ENCODE measurements at regions of chr13 and their contacts with region 1.

Region 1: DNA sequence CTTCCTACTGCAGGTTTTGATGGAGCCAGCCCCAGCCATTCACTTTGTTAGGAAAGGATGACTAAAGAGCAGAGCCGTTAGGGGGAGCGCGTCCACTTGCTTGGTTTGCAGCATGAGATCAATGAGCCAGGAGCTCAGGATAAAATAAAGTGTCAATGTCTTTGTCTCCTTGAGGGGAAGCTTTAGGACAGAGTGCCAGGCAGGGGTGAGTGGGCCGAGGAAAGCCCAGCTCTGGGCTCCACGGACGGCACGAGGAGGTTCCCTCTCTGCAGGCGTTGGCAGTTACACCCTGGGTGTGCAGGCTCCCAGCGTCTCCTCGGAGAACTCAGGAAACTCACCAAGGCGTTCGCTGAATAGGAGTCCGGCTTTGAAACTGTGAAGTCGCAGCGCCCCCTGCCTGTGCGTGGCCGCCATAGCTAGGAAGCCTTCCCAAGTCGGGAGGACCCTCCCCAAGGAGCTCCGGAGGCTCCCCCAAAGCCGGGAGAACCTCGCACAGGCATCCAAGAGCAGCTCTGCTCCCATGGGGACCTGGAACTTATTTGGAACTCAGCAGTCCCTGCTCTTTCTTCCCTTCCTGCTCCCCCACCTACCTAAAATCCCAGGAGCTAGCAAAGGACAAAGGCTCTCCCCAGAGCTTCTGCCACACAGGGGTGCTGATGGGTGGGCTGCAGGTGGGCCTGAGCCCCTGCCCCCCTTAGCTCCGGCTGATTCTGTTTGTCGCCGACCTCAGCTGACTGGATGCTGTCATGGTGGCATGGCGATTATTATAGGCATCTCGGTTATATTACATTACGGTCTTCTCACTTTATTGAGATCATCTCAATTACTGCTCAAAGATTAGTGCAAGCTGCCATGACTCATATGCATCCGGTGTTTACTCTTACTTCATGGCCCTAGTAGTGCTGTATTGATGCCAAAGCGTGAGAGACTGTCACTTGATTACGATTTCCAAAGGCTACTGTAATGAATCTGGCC is 34.4 kb downstream of the GSX1 start:
- DNase-seq: peak; percentile 77 to 91 (median 82)
- ATAC-seq: peak; percentile 98
- H3K4me3 ChIP-seq: no peak overlapping the region
- H3K27ac ChIP-seq: no peak overlapping the region
- H3K4me1 ChIP-seq: peaks cover 0 to 12% of the 10 kb centered on the region in 2 donors
- H3K27me3 ChIP-seq: peaks cover 48 to 100% of the 10 kb centered on the region in 2 donors
- CTCF ChIP-seq: peak; percentile 86 to 95

Region 2: DNA sequence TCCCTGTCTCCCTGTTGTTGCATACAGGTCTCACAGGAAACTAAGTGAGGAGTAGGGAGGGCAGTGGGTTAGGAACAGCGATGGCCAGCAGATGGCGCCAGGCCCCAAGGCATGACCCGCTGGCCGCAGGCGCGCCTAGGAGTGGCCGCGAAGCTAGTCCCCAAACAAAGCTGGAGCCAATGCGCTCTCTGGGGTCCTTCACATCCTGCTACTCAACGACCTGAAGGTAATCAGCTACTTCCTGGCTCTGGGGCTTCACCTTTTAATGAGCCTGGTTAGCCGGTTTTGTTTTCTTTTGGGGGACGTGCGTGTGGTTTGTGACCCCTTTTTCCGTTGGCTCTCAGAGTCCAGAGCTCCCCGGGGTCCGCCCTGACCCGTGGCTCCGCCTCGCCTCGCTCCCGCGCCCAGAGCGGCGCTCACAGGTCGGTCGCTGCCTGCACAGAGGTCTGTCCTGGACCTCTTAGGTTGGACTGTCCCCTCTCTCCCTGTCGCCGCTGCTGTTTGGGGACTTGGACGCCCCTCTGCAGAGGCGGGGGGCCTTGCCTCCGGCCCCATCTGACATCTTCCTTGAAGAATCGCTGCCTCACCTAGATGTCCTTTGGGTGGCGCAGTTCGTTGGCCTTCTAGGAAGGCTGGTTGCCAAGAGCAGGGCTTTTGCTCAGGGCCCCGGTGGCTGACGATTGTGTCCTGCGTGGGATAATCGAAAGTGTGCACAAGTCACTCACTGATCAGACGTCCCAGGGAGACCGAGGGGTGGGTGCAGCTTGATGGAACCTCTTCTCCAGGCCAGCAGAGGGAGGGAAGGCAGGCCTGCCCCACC is 464.4 kb before region 1 on chr13:
- intact Hi-C with region 1: loop called in 1 of 2 experiments (anchors 5 kb)
- DNase-seq: peak; percentile 81 to 97 (median 88)
- ATAC-seq: peak; percentile 99
- H3K4me3 ChIP-seq: peak overlapping the region; percentile 19 to 37
- H3K27ac ChIP-seq: no peak overlapping the region
- H3K4me1 ChIP-seq: peaks cover 6 to 10% of the 10 kb centered on the region in 2 donors
- H3K27me3 ChIP-seq: peaks cover 0 to 53% of the 10 kb centered on the region in 2 donors
- CTCF ChIP-seq: peak; percentile 88 to 94

Region 3: GRCh38 chr13:27533155-27533643 is 293.5 kb before region 1 on chr13:
- intact Hi-C with region 1: loop called in 1 of 2 experiments (anchors 10 kb)
- DNase-seq: peak; percentile 68 to 97 (median 86)
- ATAC-seq: peak; percentile 92
- H3K4me3 ChIP-seq: no peak overlapping the region
- H3K27ac ChIP-seq: no peak overlapping the region
- H3K4me1 ChIP-seq: peaks cover 0 to 7% of the 10 kb centered on the region in 2 donors
- H3K27me3 ChIP-seq: no peaks in the 10 kb centered on the region
- CTCF ChIP-seq: peak; percentile 88 to 93

Region 4: DNA sequence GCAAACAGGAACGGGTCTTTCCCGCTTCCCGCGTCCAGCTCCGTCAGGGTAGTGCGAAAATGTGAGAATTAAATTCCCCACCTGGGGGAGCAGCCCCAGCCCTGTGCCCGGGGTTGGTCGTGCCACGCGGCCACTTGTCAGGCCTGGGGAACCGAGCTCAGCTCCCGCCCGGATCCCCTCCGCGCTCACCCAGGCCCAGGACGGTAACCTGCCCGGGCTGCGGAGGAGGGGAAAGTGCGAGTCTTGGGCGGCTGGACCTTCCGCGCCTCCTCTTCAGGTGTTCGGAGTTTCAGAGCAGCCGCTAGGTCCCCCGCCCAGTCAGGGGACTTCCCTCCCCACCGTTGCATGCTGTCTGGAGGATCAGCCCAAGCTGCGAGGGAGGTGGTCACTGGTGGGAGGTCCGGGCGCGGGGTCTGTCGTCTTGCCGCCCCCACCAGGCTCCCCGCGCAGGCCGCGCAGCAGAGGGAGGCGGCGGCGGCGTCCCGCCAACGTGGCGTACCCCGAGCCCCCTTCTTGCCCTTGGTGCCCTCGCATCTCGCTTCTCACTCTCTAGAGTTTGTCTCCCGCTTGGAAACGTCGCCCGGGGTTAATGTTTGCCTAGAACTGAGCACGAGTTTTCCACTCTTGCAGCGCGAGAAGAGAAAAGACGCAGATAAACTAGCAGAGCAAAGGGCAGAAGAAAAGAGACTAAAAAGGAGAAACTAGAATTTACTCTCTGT is 153.8 kb after region 1 on chr13:
- intact Hi-C with region 1: loop called in 1 of 2 experiments (anchors 10 kb)
- DNase-seq: no peak
- ATAC-seq: no peak
- H3K4me3 ChIP-seq: no peak overlapping the region
- H3K27ac ChIP-seq: no peak overlapping the region
- H3K4me1 ChIP-seq: peaks cover 4 to 24% of the 10 kb centered on the region in 2 donors
- H3K27me3 ChIP-seq: peaks cover 81 to 100% of the 10 kb centered on the region in 2 donors
- CTCF ChIP-seq: no peak

Measured in left lung (tissue), 14 donors.